ENCODE measurements at regions of chrX and their contacts with region 1.

Region 1: DNA sequence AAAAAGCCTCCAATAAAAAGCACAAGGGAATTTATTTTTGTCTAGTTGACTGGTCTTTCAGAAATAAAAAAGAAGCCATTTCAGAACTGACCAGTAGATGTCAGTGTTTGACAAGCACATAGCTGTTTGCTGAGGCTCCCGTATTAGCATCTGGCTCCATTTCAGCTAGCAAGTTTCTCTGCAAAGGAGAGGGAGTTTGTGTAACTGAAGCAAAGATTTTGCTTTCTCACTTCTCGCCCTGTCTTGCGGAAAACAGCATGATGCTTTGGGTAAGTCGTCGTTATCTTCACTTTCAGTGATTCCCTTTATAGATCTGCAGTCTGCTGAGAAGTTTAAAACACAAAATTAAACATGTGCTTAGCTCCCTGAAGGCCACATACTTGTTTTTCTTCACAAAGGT is 85.5 kb downstream of the CT47B1 start:
- DNase-seq: peak; percentile 16
- H3K4me3 Mint-ChIP-seq: no peak overlapping the region
- H3K27ac Mint-ChIP-seq: no peak overlapping the region
- H3K4me1 Mint-ChIP-seq: peaks cover 12% of the 10 kb centered on the region
- H3K27me3 Mint-ChIP-seq: no peaks in the 10 kb centered on the region

Region 2: DNA sequence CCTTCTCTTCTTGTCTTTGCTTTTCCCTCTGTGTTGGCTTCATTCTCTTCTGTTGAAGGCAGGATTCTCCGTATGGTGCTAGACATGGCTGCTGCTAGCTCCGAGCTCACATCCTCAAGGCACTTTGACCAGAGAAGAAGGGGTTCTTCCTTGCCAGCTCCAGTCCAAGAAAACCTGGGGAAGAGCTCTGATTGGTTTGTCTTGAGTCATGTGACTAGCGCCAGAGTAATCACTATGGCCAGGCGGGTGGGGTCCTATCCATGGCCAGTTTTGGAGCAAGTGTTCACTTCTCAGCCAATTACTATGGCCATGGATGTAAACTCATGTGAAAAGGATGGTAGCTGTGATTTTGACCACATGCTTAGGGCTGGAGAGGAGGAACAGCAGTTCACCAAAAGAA is 11.3 kb after region 1 on chrX:
- CTCF ChIA-PET with region 1: interaction called, 13 read pairs
- POLR2A ChIA-PET with region 1: no interaction called
- DNase-seq: no peak
- H3K4me3 Mint-ChIP-seq: no peak overlapping the region
- H3K27ac Mint-ChIP-seq: no peak overlapping the region
- H3K4me1 Mint-ChIP-seq: peaks cover 21% of the 10 kb centered on the region
- H3K27me3 Mint-ChIP-seq: peaks cover 2% of the 10 kb centered on the region

Measured in activated CD4-positive, alpha-beta memory T cell treated with anti-CD3 and anti-CD28 coated beads, Interleukin-2, amount 10 ng/mL, durations not matched to agents 7 days and 5 days (primary cell).